Adrenal gland (tissue), 19 donors: ENCODE measurements at regions of chr3 and their contacts with region 1.

Region 1: GRCh38 chr3:129281726-129282125 is 3.1 kb downstream of the HMCES start:
- DNase-seq: no peak
- H3K4me3 ChIP-seq: no peak overlapping the region
- H3K27ac ChIP-seq: peak overlapping the region in 1 of 5 donors; percentile 67
- H3K4me1 ChIP-seq: peaks cover 5 to 37% of the 10 kb centered on the region in 2 donors
- H3K27me3 ChIP-seq: no peaks in the 10 kb centered on the region
- CTCF ChIP-seq: no peak
- POLR2A ChIP-seq: no peak

Region 2: DNA sequence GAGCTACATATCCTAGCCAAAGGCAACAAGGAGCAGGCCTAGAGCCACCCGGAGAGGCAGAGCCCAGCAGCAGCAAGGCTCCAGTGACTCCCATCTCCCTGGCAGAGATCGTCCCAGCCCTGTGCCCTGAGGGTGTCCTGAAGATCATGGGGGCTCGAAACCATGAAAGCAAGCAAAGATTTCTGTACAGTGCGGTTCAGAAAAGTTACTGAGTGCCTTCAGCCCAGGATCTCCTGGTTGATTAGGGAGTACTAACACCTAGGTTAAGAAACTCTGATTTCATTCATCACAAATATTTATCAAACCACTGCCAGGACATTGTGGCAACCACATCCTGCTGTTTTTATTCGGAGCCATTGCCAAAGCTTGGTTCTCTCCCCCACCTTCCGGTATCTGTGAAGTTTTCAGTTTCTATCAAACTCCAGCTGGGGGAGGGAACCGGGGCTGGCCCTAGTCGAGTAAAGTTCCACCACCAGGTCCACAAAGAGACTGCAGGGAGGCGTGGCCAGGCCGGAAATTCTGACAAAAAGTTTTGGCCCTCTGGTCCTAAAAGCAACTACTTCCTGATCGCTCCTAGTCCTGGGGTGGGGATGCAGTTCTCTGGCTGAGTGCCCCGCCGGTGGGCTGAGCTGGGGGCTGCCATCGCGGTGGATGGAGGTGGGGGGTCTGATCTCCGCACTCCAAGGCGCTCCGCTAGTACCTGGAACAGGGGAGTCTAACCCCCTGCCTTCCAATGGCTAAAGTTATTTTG is 161.3 kb before region 1 on chr3:
- intact Hi-C with region 1: no loop called
- DNase-seq: peak; percentile 77 to 97 (median 93)
- H3K4me3 ChIP-seq: peak overlapping the region; percentile 70 to 96 (median 83)
- H3K27ac ChIP-seq: peak overlapping the region; percentile 84 to 99 (median 91)
- H3K4me1 ChIP-seq: peaks cover 32 to 47% of the 10 kb centered on the region in 2 donors
- H3K27me3 ChIP-seq: no peaks in the 10 kb centered on the region
- CTCF ChIP-seq: peak in 2 of 6 experiments; percentile 51 to 52
- POLR2A ChIP-seq: peak; percentile 58 to 83

Region 3: GRCh38 chr3:129314757-129315222 is 33.1 kb after region 1 on chr3:
- intact Hi-C with region 1: loop called in 1 of 2 experiments (anchors 2 kb)
- DNase-seq: peak; percentile 83 to 94 (median 85)
- H3K4me3 ChIP-seq: peak overlapping the region; percentile 36 to 90 (median 64)
- H3K27ac ChIP-seq: peak overlapping the region in 3 of 5 donors; percentile 79 to 87 (median 82)
- H3K4me1 ChIP-seq: peaks cover 9 to 17% of the 10 kb centered on the region in 2 donors
- H3K27me3 ChIP-seq: no peaks in the 10 kb centered on the region
- CTCF ChIP-seq: peak in 1 of 6 experiments; percentile 1
- POLR2A ChIP-seq: no peak